Calu3 (cell line): ENCODE measurements at regions of chr6 and their contacts with region 1.

Region 1: DNA sequence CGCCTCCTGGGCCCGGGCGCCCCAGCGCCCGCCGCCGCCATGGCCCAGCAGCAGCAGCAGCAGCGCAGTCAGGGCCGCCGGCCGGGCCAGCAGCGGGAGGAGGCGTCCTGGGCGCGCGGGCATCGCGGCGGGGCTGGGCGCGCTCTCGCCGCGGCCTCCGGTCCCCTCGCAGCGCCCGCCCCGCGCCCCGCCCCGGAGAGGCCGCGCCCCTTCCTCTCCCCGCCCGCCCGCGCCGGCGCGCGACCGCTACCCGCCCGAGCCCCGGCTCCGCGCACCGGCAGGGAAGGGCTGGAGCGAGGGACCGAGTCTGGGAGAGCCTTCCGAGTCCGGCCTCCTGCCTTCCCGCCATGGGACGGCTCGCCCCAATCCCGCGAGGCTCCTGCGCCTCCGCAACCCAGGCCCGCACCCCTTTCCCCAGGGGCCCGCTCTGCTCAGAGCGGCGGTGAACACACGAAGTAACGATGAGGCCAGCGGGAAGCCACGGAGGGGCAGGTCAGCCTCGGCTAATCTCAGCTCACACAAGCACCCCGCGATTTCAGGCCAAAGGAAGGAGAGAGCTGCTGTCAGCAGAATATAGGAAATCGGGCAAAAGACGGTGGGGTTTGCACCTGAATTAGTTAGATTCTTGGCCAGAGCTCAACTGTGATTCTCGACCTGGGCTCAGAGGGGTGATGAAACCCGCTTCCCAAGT is at the start of gene TXNDC5:
- DNase-seq: peak; percentile 76
- H3K4me3 Mint-ChIP-seq: peak within 1 kb of the TSS; percentile 88
- H3K27ac Mint-ChIP-seq: peak within 1 kb of the TSS; percentile 27
- H3K4me1 Mint-ChIP-seq: peaks cover 8% of the 10 kb centered on the region
- H3K27me3 Mint-ChIP-seq: no peaks in the 10 kb centered on the region
- CTCF ChIP-seq: no peak
- total RNA-seq, gene TXNDC5: 81.3 and 111 TPM in 2 replicates

Region 2: GRCh38 chr6:7924867-7925266 is 14.1 kb after region 1 on chr6:
- CTCF ChIA-PET with region 1: no interaction called
- intact Hi-C with region 1: no loop called
- DNase-seq: no peak
- H3K4me3 Mint-ChIP-seq: no peak overlapping the region
- H3K27ac Mint-ChIP-seq: no peak overlapping the region
- H3K4me1 Mint-ChIP-seq: no peaks in the 10 kb centered on the region
- H3K27me3 Mint-ChIP-seq: no peaks in the 10 kb centered on the region
- CTCF ChIP-seq: no peak

Region 3: DNA sequence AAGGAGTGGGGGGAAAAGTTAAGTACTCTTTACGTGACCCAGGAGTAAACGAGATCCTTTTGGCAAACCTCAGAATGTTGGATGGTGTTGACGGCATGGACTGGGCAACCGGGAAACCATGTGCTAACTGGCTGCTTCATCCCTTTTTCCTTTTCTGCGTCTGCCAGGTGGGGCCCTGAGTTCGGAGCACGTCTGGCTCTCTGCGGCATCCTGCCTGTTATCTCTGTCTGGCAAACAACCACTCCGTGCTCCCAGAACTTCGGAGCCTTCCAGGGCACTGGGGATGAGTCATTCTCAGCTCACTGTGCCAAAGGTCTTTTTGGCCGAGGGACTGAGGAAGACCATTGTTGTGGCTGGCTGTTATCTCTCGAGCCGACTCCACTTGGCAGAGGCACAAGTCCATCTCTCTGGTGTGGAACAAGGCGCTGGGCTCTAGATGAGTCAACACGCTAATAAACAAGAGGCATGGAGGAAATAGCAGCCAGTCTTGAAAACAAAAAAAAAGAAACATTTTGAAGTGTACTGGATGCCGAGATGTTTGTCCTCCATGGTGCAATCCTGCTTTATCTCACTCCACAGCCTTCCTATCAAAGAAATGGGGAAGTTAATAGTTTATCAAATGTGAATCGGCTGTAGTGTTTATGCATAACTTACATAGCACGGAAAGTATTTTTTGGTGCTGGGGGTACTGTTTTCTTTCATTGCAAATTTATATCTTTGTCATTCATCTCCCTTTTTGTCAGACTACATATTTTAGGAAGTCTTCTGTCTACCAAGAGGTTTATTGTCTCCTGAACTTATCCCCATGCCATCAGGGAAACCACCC is 64.4 kb after region 1 on chr6:
- CTCF ChIA-PET with region 1: no interaction called
- intact Hi-C with region 1: loop called (anchors 5 kb)
- DNase-seq: peak; percentile 67
- H3K4me3 Mint-ChIP-seq: peak overlapping the region; percentile 46
- H3K27ac Mint-ChIP-seq: peak overlapping the region; percentile 27
- H3K4me1 Mint-ChIP-seq: peaks cover 21% of the 10 kb centered on the region
- H3K27me3 Mint-ChIP-seq: no peaks in the 10 kb centered on the region
- CTCF ChIP-seq: no peak